Heart left ventricle (tissue), 16 donors: ENCODE measurements at regions of chr9 and their contacts with region 1.

Region 1: GRCh38 chr9:15606643-15607472 is 54.0 kb downstream of the CCDC171 start:
- DNase-seq: no peak
- ATAC-seq: no peak
- H3K4me3 ChIP-seq: no peak overlapping the region
- H3K27ac ChIP-seq: no peak overlapping the region
- H3K4me1 ChIP-seq: peaks cover 0 to 5% (median 0%) of the 10 kb centered on the region in 12 donors
- H3K27me3 ChIP-seq: no peaks in the 10 kb centered on the region
- CTCF ChIP-seq: peak; percentile 68 to 87 (median 77)
- POLR2A ChIP-seq: no peak

Region 2: GRCh38 chr9:15104826-15105420 is 501.9 kb before region 1 on chr9:
- intact Hi-C with region 1: loop called in 1 of 10 experiments (anchors 10 kb)
- DNase-seq: peak in 1 of 5 donors; percentile 20
- ATAC-seq: peak in 2 of 4 donors; percentile 42 to 64
- H3K4me3 ChIP-seq: no peak overlapping the region
- H3K27ac ChIP-seq: no peak overlapping the region
- H3K4me1 ChIP-seq: no peaks in the 10 kb centered on the region
- H3K27me3 ChIP-seq: no peaks in the 10 kb centered on the region
- CTCF ChIP-seq: peak; percentile 53 to 77 (median 66)
- POLR2A ChIP-seq: no peak

Region 3: DNA sequence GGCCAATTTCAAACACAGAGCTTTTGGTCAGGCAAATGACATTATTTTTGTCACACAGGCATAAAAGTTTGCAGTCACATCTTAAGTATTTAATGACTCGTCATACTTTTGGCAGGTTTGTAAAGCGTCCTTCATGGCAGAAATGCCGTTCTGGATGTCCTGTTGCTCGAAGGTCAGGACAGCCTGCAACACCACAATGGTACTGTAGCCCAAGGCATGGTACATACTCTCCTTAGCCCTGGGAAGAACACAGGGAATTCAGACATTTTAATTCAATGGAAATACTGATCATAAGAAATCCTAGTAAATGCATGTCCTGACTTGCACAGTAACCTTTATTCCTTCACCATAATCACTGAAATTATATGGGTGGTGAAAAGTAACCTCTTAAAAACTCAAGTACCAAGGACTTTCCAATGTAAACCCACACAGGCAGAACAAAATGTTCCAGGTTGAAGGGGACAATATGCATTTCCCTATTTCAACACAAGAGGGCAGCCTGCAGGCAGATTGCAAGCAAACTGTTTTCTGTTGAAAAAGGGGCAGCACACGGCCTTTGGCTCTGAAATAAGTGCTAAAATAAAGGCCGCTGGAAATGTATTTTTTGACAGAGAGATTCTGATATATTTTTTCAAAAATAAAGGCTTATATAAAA is 395.6 kb before region 1 on chr9:
- intact Hi-C with region 1: loop called (anchors 2 to 5 kb)
- DNase-seq: peak in 3 of 5 donors; percentile 34 to 60 (median 53)
- ATAC-seq: peak; percentile 61 to 72 (median 67)
- H3K4me3 ChIP-seq: peak overlapping the region in 1 of 12 donors; percentile 6
- H3K27ac ChIP-seq: peak overlapping the region in 3 of 12 donors; percentile 14 to 66 (median 32)
- H3K4me1 ChIP-seq: peaks cover 0 to 12% (median 7%) of the 10 kb centered on the region in 12 donors
- H3K27me3 ChIP-seq: no peaks in the 10 kb centered on the region
- CTCF ChIP-seq: peak; percentile 82 to 97 (median 92)
- POLR2A ChIP-seq: no peak

Region 4: GRCh38 chr9:15277400-15278090 is 329.3 kb before region 1 on chr9:
- intact Hi-C with region 1: loop called in 8 of 10 experiments (anchors 2 to 10 kb)
- DNase-seq: no peak
- ATAC-seq: no peak
- H3K4me3 ChIP-seq: no peak overlapping the region
- H3K27ac ChIP-seq: no peak overlapping the region
- H3K4me1 ChIP-seq: no peaks in the 10 kb centered on the region
- H3K27me3 ChIP-seq: no peaks in the 10 kb centered on the region
- CTCF ChIP-seq: peak in 11 of 12 donors; percentile 13 to 56 (median 40)
- POLR2A ChIP-seq: no peak

Region 5: DNA sequence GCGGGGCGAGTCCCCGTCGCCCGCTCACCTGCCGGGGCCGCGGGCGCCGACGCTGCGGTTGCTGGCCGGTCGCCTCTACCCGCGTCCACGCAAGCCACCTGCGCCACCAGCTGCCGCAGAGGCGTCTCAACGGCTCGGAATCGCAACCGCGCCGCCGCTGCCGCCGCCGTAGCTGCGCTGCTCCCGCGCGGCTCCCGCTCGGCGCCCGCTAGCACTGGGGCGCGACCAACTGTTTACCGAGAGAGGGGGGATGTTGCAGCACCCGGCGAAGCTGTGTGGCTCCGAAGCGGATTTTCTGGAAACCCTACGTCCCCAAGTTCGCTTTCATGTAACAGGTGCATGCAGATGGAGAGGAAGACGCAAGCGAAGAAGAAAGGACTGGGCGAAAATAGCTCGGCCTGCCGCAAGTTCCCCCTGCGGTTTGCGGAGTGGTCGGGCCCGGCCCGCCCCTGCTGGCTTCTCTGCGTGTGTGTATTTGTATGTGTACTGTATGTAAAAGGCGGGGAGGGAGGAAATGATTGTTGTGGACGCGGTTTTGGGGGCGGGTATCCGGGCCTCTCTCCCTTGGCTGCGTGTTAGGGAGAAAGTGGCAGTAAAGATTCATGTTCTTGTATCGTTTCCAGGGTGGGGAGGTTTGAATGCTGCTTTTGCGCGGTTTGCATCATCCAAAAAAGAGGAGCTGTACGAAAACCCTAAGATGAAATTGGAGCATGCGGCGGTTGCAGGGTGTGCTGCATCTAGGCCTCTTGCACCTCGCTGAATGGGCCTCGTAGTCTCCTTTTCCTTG is 95.9 kb before region 1 on chr9 and contains the start of gene PSIP1:
- intact Hi-C with region 1: loop called in 1 of 10 experiments (anchors 10 kb)
- DNase-seq: peak; percentile 75 to 88 (median 77)
- ATAC-seq: peak; percentile 87 to 96 (median 94)
- H3K4me3 ChIP-seq: peak within 1 kb of the TSS; percentile 80 to 99 (median 92)
- H3K27ac ChIP-seq: peak within 1 kb of the TSS; percentile 81 to 98 (median 92)
- H3K4me1 ChIP-seq: peaks cover 0 to 33% (median 18%) of the 10 kb centered on the region in 12 donors
- H3K27me3 ChIP-seq: no peaks in the 10 kb centered on the region
- CTCF ChIP-seq: peak in 7 of 12 donors; percentile 3 to 20 (median 9)
- POLR2A ChIP-seq: peak in 1 of 2 donors; percentile 65
- total RNA-seq, gene PSIP1: 16.5 to 29.1 (median 21.9) TPM

Region 6: GRCh38 chr9:15552636-15553527 is 54.0 kb before region 1 on chr9 and contains the start of gene CCDC171:
- intact Hi-C with region 1: loop called in 1 of 10 experiments (anchors 2 kb)
- DNase-seq: peak; percentile 93 to 95 (median 95)
- ATAC-seq: peak; percentile 96 to 99 (median 98)
- H3K4me3 ChIP-seq: peak within 1 kb of the TSS; percentile 54 to 94 (median 80)
- H3K27ac ChIP-seq: peak within 1 kb of the TSS; percentile 59 to 91 (median 82)
- H3K4me1 ChIP-seq: peaks cover 0 to 10% (median 4%) of the 10 kb centered on the region in 12 donors
- H3K27me3 ChIP-seq: no peaks in the 10 kb centered on the region
- CTCF ChIP-seq: peak in 1 of 12 donors; percentile 7
- POLR2A ChIP-seq: peak in 1 of 2 donors; percentile 62
- total RNA-seq, gene CCDC171: 0.44 to 3.4 (median 1.4) TPM